ENCODE measurements at regions of chr11 and their contacts with region 1.

Region 1: DNA sequence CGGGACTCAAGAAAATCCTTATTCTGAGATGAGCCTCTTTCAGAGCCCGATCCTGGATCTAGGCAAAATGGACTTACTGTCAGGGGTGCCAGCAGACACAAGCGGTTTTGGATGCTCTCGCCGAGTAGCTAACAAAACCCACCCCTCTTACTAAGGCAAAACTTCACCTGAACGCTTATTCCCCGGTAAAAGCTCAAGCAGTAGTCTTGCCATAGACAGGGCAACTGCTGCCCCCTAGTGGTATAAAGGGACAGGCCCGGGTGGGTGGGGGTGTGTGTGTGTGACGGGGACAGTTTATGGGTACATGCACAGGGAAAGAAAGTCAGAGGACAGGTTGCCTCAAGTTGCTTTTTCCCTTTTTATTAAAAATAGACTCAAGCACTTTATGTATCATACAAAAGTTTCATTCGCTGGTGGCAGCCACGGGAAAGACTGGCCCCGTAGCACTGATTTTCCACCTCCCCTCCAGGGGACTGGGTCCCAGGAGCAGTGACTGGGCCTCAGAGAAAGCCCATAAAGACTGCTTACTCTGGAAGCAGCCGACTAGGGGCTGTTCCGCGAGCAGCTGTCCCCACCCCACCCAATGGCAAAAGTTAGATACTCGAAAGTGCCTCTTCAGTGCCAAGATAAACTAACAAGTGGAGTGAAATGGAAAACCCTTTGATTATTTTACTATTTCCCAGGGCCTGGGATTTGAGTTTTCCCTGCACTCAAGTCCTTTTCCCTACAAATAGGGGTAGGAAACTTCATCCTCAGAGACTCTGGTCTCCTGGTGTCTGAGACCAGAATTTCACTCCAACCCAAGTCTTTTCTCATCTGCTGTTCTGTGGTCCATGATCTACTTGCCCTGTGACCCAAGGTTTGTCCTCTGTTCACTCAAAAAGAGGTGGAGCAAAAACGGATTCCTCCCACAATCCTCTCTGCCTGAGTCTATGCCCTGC is 4.7 kb downstream of the YPEL4 start:
- DNase-seq: no peak
- H3K4me3 ChIP-seq: no peak overlapping the region
- CTCF ChIP-seq: peak; percentile 82

Region 2: DNA sequence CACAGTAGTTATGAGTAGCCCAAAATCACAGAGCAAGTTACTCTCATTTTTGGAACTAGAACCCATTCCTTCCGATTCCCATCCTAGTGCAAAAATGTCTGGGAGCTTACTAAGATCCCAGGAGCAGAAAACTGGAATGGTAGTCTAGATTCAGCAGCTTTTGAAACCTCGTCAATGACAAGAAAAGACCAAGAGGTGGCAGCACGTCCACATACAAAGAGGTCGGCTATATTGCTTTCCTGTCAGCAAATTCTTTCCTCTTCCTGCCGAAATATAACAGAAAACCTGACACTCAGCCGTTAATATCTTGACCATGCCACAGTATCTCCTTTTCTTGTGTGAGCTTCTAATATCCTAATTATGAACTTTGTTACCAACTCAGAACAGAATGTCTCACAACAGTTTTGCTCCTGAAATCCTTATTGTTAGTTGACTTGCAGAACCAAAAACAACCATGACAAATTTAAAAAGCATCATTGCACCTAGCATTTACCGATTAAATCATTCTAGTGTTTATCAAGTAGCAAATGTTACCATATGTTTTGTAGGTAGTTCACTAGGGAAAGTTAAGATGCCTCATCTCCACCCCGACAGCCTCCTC is 803.7 kb before region 1 on chr11:
- CTCF ChIA-PET with region 1: interaction called, 10 read pairs
- POLR2A ChIA-PET with region 1: no interaction called
- DNase-seq: peak; percentile 10
- H3K4me3 ChIP-seq: no peak overlapping the region
- CTCF ChIP-seq: peak; percentile 65

Region 3: DNA sequence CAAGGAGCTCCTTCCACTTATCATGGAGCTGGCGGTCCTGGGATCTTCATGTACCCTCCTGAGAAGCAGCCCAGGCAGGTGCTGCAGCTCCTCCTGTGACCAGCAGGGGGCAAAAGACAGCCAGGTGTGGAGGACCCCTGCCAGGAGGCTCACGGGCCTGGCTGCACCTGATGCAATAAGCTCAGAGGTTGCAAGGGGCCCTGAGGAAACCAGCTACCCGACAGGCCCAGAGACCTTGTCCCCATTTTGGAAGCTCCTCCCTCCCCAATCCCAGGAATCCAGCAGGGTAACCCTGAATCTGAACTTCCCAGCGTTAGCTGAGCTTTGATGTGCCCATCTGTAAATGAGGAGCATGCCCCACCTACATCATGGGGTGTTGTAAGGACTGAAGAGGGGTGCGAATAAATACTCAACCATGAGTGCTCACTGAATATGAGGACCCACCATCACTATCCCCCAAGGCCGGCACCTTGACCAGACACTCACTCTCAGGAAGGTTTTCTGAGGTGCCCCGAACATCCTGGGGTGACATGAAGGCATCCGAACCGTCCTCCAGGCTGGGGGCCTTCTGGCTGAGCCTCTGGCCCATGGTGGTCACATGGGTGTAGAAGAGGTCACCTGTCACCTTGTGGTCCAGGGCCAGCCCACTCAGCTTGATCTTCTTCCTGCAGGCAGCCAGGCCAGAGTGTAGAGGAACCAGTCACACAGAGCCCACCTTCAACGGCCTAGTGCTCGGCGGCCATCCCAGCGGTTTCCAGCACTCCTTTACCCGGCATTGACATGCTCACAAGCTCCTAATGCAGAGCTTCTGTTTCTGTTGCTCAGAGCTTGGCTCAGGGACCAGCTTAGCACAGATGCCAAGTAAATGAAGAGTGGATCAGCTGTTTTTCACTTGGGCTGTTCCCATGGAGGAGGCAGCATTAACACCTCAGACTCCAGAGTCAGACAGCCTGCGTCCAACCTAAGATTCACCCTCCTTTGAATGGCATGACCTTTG is 151.2 kb before region 1 on chr11:
- CTCF ChIA-PET with region 1: interaction called, 22 read pairs
- POLR2A ChIA-PET with region 1: no interaction called
- DNase-seq: no peak
- H3K4me3 ChIP-seq: no peak overlapping the region
- CTCF ChIP-seq: peak; percentile 89

Region 4: DNA sequence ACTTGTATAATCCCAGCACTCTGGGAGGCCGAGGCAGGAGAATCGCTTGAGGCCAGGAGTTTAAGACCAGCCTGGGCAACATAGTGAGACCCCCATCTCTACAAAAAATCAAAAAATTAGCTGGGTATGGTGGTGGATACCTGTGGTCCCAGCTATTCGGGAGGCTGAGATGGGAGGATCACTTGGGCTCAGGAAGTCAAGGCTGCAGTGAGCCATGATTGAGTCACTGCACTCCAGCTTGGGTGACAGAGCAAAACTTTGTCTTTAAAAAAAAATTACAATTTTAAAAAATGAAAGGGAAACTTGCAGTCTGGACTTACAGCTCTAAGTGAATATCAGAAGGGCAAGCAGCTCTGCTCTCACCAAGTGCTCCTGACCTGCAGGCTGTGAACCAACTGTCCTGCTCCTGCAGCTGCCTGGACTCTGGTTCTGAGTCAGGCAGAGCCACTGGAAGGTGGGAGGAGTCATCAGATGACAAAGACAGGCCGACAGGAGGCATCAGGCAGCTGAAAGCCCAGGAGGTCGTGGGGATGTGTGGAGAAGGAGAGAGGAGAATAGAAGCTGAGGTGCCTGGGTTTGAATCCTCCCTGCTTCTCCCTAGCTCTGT is 98.0 kb before region 1 on chr11:
- CTCF ChIA-PET with region 1: interaction called, 22 read pairs
- POLR2A ChIA-PET with region 1: interaction called, 3 read pairs
- DNase-seq: no peak
- H3K4me3 ChIP-seq: no peak overlapping the region
- CTCF ChIP-seq: peak; percentile 22

Region 5: DNA sequence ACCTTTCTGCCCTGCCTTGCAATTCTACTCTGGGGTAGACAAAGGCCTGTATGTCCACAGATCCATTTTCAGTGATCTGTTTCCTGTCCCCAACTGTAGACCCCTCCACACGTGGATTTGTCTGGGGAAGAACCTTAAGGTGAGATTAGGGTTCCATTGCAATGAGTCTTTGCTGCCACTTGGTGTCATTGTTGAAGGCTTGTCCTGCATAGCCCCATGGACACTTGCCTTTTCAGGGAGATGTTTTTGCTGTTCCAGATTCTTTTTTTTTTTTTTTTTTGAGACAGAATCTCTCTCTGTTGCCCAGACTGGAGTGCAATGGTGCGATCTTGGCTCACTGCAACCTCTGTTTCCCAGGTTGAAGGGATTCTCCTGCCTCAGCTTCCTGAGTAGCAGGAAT is 25.7 kb before region 1 on chr11:
- CTCF ChIA-PET with region 1: interaction called, 12 read pairs
- POLR2A ChIA-PET with region 1: no interaction called
- DNase-seq: no peak
- H3K4me3 ChIP-seq: no peak overlapping the region
- CTCF ChIP-seq: no peak

Region 6: DNA sequence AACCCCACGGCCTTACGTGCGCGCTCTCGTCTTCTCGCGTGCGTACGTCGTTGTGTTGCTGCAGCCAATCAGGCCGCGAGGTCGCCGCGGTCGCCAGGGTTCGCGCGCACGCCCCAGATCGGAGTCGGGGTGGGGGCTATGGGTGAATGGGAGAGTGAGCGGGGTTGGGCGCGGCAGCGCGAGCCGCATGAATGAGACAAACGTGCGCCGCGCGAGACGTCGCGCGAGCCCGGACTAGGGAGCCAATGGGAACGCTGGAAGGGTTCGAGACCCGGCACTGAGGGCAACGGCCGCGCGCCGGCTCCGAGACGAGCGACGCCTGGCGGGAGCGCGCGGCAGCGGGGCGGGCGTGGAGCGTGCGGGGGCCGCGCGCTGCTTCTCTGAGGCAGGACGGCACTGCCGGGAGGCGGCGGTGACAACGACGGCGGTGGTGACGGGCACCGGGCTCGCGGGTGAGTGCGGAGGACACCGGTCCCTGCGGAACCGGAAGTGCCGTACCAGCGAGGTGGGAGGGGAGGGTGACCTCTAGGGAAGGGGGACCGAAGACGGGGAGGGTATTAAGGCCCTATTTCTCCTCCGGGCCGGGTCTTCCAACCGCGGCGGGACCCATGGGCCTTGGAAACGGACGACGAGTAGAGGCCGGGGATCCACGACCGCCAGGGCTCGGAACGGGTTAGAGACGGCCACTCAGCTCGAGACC is 22.9 kb after region 1 on chr11 and contains the start of gene ZDHHC5:
- CTCF ChIA-PET with region 1: interaction called, 13 read pairs
- POLR2A ChIA-PET with region 1: interaction called, 8 read pairs
- DNase-seq: peak; percentile 98
- H3K4me3 ChIP-seq: peak within 1 kb of the TSS; percentile 94
- CTCF ChIP-seq: peak; percentile 14

Measured in AG04449 (cell line).